Sigmoid colon (tissue), 7 donors: ENCODE measurements at regions of chr17 and their contacts with region 1.

Region 1: GRCh38 chr17:14926526-14927122 is 338.5 kb downstream of the PMP22 start:
- DNase-seq: no peak
- H3K4me3 ChIP-seq: no peak overlapping the region
- H3K27ac ChIP-seq: no peak overlapping the region
- H3K4me1 ChIP-seq: no peaks in the 10 kb centered on the region
- H3K27me3 ChIP-seq: peaks cover 0 to 18% (median 8%) of the 10 kb centered on the region in 3 donors
- CTCF ChIP-seq: peak; percentile 44 to 74 (median 47)
- EP300 ChIP-seq: no peak
- POLR2A ChIP-seq: no peak

Region 2: DNA sequence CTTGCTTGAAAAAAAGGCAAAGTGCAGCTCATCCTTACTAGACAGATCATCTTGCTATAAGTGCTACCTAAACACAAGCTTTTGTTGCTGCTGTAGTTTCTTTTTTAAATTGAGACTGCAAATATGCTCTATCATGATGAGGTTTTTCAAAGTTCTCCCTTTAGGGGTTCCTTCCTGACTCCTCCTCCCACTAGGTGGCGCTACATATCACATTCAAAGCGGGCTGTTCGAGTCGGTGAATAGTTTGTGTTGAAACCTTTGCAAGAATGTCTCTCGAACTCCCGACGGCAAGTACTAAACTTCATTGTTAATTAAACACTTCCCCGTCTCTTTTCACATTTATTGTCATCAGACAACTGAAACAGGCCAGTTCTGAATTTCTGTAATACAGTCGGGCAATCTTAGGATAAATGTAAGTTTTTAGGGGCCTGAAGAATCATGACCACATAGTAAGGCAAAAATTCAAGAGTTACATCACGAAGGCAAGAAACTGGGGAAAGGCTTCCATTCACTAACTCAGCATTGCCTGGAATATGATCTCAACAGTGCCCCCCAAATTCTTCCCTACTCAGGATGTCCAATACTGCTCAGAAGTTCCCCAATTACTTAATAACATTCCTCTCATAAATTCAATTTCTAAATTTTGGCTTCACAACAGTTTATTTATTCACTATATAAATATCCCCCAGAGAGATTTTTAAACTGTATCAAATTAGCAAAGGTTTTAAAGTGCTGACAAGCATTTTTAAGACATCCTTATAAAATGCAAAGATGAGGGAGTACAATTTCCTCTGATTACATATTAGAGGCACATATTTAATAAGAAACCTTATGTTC is 1331.6 kb before region 1 on chr17:
- intact Hi-C with region 1: loop called (anchors 5 kb)
- DNase-seq: peak; percentile 85
- H3K4me3 ChIP-seq: no peak overlapping the region
- H3K27ac ChIP-seq: peak overlapping the region in 1 of 4 donors; percentile 1
- H3K4me1 ChIP-seq: no peaks in the 10 kb centered on the region
- H3K27me3 ChIP-seq: peaks cover 0 to 41% (median 0%) of the 10 kb centered on the region in 3 donors
- CTCF ChIP-seq: peak; percentile 44 to 80 (median 74)
- EP300 ChIP-seq: no peak
- POLR2A ChIP-seq: no peak

Region 3: DNA sequence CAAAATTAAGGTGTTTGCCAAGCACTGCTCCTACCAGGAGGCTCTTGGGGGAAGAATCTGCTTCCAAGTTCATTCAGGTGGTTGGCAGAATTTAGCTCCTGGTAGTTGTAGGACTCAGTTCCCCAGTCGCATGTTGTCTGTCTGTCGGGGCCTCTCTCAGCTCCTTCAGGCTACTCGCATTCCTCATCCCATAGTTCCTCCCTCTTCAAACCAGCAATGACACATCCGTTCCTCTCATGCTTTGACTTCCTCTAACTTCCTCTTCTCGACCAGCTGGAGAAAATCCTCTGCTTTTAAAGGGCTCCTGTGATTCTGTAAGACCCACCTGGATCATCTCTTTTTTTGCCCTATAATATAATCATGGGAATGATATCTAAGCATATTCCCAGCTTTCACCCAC is 230.4 kb after region 1 on chr17:
- intact Hi-C with region 1: loop called (anchors 10 kb)
- DNase-seq: no peak
- H3K4me3 ChIP-seq: no peak overlapping the region
- H3K27ac ChIP-seq: no peak overlapping the region
- H3K4me1 ChIP-seq: peaks cover 0 to 9% (median 0%) of the 10 kb centered on the region in 4 donors
- H3K27me3 ChIP-seq: peaks cover 0 to 4% (median 0%) of the 10 kb centered on the region in 3 donors
- CTCF ChIP-seq: no peak
- EP300 ChIP-seq: no peak
- POLR2A ChIP-seq: no peak